Activated T-helper 1 cell treated with anti-CD3 and anti-CD28 coated beads, Interleukin-12 subunit alpha, Interleukin-12 subunit beta, Interleukin-2, Interleukin-4 antibody, amounts not matched to agents 30 ng/mL and 10 ng/mL and 1 ng/mL, durations not matched to agents 14 hours and 24 hours and 36 hours (primary cell): ENCODE measurements at regions of chr1 and their contacts with region 1.

Region 1: GRCh38 chr1:222009105-222009730 is 267.3 kb upstream of the DUSP10 start:
- DNase-seq: peak; percentile 10
- H3K4me3 Mint-ChIP-seq: no peak overlapping the region
- H3K27ac Mint-ChIP-seq: no peak overlapping the region
- H3K4me1 Mint-ChIP-seq: peaks cover 4% of the 10 kb centered on the region
- H3K27me3 Mint-ChIP-seq: peaks cover 18% of the 10 kb centered on the region

Region 2: DNA sequence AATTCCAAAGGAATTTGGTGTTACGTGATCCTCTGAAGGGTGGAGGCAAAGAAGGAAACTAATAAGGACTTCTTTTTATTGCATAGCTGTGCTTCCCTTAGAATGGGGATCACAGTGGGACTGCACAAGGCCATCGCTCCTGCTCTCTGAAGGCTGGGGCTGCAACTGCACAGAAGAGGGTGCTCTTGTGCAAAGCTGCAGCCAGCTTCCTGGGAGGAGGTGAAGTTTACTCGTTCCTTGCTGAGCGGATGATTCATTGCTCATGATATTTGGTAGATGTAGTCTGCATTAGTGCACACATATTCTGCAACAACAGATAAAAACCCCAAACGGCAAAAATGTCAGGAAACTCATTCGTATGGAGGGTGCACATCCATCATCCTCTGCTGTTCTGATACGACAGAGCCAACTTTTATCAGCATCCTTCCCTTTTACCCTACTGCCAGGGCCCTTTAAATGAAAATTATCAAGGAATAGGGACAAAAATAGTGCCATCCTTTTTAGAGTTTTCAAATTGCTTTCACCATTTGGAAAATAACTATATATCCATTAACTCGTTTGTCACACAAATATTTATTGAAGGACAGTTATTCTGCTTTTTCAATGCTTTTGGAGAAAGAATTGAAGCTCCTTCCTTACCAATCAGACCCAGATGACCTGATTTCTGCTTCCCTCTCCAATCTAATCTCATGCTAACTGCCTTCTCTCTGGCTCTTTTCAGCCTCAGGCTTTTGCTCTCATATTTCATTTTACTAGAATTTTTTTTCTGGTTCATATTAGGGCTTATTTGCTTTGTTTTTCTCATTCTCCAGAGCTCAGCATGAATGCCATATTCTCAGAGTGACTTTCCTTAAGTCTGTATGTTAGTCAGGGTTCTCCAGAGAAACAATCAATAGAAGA is 530.9 kb before region 1 on chr1:
- intact Hi-C with region 1: loop called (anchors 2 kb)
- DNase-seq: peak; percentile 31
- H3K4me3 Mint-ChIP-seq: no peak overlapping the region
- H3K27ac Mint-ChIP-seq: no peak overlapping the region
- H3K4me1 Mint-ChIP-seq: peaks cover 5% of the 10 kb centered on the region
- H3K27me3 Mint-ChIP-seq: peaks cover 5% of the 10 kb centered on the region

Region 3: DNA sequence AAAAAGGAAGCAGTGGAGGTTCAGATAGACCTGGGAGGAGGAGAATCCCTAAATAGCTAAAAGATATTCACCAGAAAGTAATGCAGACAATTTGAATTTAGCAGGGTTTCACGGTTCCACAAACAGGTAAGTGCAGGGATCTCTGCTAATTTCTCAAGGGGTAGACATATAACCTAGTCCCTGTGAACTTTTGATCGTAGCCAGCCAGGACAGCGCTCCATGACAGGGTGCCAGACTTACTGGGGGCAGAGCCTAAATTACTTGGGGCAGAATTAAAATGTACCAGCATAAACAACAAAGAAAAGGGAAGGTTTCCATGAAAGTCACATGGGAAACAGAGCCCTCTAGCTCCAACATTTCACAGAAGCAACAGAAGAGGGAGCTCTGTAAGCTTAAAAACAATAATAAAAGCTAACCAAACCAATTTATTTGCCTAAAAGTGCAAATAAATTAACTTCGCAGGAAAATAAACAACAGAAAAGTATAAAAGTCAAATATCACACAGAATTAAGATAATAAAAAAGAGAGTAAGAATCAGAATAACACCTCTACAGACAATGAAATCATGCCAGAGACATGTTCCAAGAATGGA is 465.6 kb before region 1 on chr1:
- intact Hi-C with region 1: loop called (anchors 5 kb)
- DNase-seq: no peak
- H3K4me3 Mint-ChIP-seq: no peak overlapping the region
- H3K27ac Mint-ChIP-seq: no peak overlapping the region
- H3K4me1 Mint-ChIP-seq: peaks cover 4% of the 10 kb centered on the region
- H3K27me3 Mint-ChIP-seq: peaks cover 19% of the 10 kb centered on the region